ENCODE measurements at regions of chr12 and their contacts with region 1.

Region 1: GRCh38 chr12:52221912-52222457 is 11.1 kb upstream of the KRT7 start:
- DNase-seq: peak; percentile 93
- H3K4me3 Mint-ChIP-seq: no peak overlapping the region
- H3K27ac Mint-ChIP-seq: peak overlapping the region; percentile 26
- H3K4me1 Mint-ChIP-seq: peaks cover 16% of the 10 kb centered on the region
- H3K27me3 Mint-ChIP-seq: peaks cover 37% of the 10 kb centered on the region

Region 2: GRCh38 chr12:52243856-52244614 is 22.1 kb after region 1 on chr12:
- CTCF ChIA-PET with region 1: interaction called, 33 read pairs
- POLR2A ChIA-PET with region 1: no interaction called
- intact Hi-C with region 1: loop called (anchors 1 kb)
- DNase-seq: peak; percentile 89
- H3K4me3 Mint-ChIP-seq: peak overlapping the region; percentile 48
- H3K27ac Mint-ChIP-seq: peak overlapping the region; percentile 79
- H3K4me1 Mint-ChIP-seq: peaks cover 28% of the 10 kb centered on the region
- H3K27me3 Mint-ChIP-seq: no peaks in the 10 kb centered on the region

Region 3: DNA sequence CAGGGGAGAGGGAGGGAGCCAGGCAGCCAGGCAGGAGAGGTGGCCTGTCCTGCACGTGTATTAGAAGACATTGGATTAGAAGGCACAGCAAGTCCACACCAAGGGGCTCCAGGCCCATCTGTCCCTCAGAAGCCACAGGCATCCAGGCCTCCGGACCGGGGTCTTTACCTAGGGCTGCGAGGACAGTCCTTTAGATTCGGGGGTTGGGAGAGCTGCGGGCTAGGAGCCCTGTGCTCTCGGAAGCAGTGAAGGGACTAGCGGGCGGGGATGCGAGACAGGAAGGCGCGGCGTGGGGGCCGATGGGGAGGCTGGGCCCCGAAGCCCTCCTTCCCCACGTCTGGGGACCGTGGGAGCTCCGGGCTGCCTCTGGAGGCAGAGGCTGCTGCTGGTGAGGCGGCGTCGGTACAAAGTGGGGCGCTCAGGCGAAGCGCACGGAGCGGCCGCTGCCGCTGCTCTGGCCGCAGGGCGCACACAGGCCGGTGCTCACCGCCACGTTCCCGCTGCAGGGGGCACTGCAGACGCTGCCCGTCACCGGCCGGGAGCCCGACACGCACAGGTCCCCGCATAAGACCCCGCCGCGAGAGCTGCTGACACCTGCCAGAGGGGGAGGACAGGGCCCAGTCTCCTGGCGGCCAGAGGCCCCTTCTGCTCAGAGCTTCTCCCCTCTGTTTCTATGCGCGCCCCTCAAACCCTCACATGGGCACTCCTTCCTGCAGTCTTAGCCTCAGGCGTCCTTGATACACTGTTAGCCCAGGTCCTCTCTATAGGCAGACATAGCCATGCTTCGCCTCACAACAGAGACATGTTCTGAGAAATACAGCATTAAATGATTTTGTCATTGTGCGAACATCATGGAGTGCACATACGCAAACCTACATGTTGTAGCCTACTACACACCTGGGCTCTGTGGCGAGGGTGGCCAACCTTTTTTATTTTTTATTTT is 28.3 kb after region 1 on chr12:
- CTCF ChIA-PET with region 1: interaction called, 33 read pairs
- POLR2A ChIA-PET with region 1: no interaction called
- intact Hi-C with region 1: no loop called
- DNase-seq: no peak
- H3K4me3 Mint-ChIP-seq: no peak overlapping the region
- H3K27ac Mint-ChIP-seq: no peak overlapping the region
- H3K4me1 Mint-ChIP-seq: peaks cover 26% of the 10 kb centered on the region
- H3K27me3 Mint-ChIP-seq: peaks cover 14% of the 10 kb centered on the region

Region 4: GRCh38 chr12:52416383-52416750 is 194.4 kb after region 1 on chr12:
- CTCF ChIA-PET with region 1: no interaction called
- POLR2A ChIA-PET with region 1: no interaction called
- intact Hi-C with region 1: no loop called
- DNase-seq: no peak
- H3K4me3 Mint-ChIP-seq: no peak overlapping the region
- H3K27ac Mint-ChIP-seq: no peak overlapping the region
- H3K4me1 Mint-ChIP-seq: no peaks in the 10 kb centered on the region
- H3K27me3 Mint-ChIP-seq: peaks cover 6% of the 10 kb centered on the region